Motor neuron (in vitro differentiated cells): ENCODE measurements at regions of chr7 and their contacts with region 1.

Region 1: DNA sequence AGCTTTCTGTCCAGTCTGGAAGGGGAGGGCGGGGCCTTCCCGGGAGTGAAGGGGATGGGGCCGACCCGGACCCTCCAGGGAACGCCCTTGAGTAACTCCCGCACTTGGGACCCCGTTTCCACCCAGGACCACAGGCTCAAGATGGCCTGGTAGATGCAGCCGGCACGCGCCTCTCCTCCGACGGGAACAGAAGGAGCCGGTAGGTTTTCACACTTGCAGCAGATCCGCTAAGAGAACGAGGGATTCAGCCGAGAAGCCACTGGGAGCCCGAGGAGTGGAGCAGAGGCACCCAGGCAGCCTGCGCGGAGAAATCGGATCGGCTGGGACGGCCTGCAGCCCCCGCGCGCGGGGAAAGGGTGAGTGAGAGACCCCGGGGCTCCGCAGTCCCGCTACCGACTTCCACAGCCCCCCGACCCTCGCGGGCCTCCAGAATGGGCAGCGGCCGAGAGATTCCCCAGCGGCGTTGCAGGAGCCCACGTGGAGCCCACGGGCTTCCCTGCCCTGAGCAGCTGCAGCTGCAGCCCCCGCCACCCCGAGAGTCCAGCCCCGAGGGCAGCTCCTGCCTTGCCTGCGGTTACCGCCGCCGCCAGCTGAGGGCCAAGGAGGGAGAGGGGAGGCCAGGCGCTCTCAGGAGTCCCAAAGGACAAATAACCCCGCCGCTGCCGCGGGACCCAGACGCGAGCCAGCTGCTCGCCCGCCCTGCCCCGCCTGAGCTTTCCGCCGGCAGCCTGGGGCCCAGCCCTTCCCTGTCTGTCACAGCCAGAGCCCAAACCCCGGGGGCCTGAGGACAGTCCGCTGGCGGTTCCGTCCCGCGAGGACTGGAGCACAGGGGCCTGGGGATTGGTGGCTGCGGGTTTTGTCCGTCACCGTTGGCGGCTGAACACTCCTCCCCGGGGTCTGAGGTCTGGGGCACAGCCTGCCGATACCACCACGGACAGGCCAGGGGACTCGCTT is 21.8 kb downstream of the IFT22 start:
- ATAC-seq: peak in 4 of 8 experiments; percentile 21 to 76 (median 58)
- H3K4me3 ChIP-seq: no peak overlapping the region
- H3K27ac ChIP-seq: no peak overlapping the region
- H3K4me1 ChIP-seq: no peaks in the 10 kb centered on the region

Region 2: GRCh38 chr7:100949227-100949932 is 350.4 kb before region 1 on chr7 and contains the start of gene MUC3A:
- in situ Hi-C with region 1: no loop called
- ATAC-seq: no peak
- H3K4me3 ChIP-seq: no peak within 1 kb of the TSS
- H3K27ac ChIP-seq: no peak within 1 kb of the TSS
- H3K4me1 ChIP-seq: no peaks in the 10 kb centered on the region
- total RNA-seq, gene MUC3A: 0.11 to 2.2 (median 0.72) TPM in 7 of 8 experiments, not detected in the other

Region 3: GRCh38 chr7:101138213-101138870 is 161.4 kb before region 1 on chr7:
- in situ Hi-C with region 1: loop called in 2 of 9 experiments (anchors 25 kb)
- ATAC-seq: peak; percentile 82 to 98 (median 97)
- H3K4me3 ChIP-seq: peak overlapping the region; percentile 17 to 29 (median 24)
- H3K27ac ChIP-seq: peak overlapping the region; percentile 70 to 80
- H3K4me1 ChIP-seq: peaks cover 16 to 18% of the 10 kb centered on the region in 2 donors